Psoas muscle (tissue), 8 donors: ENCODE measurements at regions of chr1 and their contacts with region 1.

Region 1: DNA sequence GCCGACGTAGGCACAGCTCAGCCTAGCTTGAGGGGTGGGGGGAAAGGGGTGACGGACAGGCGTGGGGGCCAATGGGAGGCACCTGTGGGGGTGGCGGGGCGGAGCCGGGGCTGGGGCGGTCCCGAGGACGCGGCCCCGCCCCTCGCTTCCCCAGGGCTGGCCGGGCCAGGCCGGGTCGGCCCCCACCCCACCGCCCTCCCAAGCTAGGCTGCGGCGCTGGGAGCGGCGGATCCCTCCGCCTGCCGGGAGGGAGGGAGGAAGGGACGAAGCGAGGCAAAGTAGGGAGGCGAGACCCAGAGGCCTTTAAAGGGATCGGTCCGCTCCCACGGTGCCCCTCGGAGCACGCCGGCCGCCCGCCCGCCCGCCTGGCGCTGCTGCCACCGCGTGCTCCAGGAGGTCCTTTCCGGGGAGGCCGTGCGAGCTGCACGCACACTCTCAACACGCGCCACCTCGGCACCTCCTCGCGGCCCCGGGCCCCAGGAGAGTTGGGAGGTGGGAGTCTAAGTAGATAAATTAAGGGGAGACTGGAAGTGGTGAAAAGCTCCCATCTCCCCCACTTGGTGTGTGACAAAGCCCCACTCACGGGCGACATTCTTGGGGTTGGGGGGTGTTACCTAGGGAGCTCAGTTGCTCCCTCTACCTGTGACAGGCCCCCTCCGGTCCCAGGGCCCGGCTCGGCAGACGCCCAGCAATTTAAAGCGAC is 373 bp upstream of the MEF2D start:
- DNase-seq: peak; percentile 95 to 97
- ATAC-seq: peak; percentile 57 to 71 (median 68)
- H3K4me3 ChIP-seq: peak overlapping the region; percentile 98
- H3K27ac ChIP-seq: peak overlapping the region; percentile 99
- H3K4me1 ChIP-seq: peaks cover 60% of the 10 kb centered on the region
- H3K27me3 ChIP-seq: no peaks in the 10 kb centered on the region
- CTCF ChIP-seq: peak; percentile 45

Region 2: DNA sequence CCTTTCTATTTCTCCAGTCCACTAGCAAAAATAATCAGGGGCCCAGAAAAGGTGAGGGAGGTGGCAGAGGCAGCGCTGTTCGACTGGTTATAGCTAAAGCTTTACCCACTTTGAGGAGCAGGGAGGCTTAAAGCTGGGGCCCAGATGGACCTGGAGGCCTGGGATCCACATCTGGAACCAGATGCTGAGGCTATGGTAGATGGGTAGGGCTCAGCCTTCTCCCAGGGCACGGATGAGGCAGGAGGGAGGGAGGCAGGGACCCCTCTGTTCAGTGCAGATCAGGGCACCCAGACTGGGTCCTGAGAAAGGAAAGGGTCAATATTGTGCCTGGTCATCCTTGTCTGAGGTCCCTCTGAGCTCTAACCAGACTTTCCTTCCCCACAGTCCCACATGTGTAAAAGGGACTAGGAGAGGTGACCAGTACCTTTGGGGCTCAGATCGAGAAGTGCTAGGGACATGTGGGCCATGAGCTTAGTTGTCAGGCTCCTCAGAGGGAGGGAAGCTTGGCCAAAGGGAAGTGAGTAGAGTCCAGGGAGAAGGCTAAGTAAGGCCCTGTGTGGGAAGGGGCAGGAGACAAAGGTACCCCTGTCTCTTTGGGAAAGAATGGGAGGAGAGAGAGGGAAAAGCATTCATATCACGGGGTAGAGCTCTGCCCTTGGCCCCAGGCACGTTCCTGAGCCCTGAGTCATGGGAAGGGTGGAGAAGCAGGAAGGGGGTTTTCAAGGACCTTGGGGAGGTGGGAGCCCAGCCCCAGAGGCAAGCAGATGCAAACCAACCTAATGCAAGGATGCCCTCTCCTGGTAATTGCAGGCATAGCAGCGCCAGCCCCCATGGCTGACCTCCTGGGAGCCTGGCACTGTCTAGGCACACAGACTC is 371.0 kb before region 1 on chr1:
- intact Hi-C with region 1: loop called in 1 of 2 experiments (anchors 10 kb)
- DNase-seq: peak; percentile 89 to 93
- ATAC-seq: peak; percentile 77 to 81 (median 80)
- H3K4me3 ChIP-seq: peak overlapping the region; percentile 45
- H3K27ac ChIP-seq: peak overlapping the region; percentile 99
- H3K4me1 ChIP-seq: peaks cover 57% of the 10 kb centered on the region
- H3K27me3 ChIP-seq: no peaks in the 10 kb centered on the region
- CTCF ChIP-seq: peak; percentile 98

Region 3: GRCh38 chr1:156276966-156277381 is 224.0 kb before region 1 on chr1:
- intact Hi-C with region 1: no loop called
- DNase-seq: no peak
- ATAC-seq: peak in 2 of 4 donors; percentile 26 to 32
- H3K4me3 ChIP-seq: no peak overlapping the region
- H3K27ac ChIP-seq: no peak overlapping the region
- H3K4me1 ChIP-seq: peaks cover 25% of the 10 kb centered on the region
- H3K27me3 ChIP-seq: no peaks in the 10 kb centered on the region
- CTCF ChIP-seq: no peak

Region 4: DNA sequence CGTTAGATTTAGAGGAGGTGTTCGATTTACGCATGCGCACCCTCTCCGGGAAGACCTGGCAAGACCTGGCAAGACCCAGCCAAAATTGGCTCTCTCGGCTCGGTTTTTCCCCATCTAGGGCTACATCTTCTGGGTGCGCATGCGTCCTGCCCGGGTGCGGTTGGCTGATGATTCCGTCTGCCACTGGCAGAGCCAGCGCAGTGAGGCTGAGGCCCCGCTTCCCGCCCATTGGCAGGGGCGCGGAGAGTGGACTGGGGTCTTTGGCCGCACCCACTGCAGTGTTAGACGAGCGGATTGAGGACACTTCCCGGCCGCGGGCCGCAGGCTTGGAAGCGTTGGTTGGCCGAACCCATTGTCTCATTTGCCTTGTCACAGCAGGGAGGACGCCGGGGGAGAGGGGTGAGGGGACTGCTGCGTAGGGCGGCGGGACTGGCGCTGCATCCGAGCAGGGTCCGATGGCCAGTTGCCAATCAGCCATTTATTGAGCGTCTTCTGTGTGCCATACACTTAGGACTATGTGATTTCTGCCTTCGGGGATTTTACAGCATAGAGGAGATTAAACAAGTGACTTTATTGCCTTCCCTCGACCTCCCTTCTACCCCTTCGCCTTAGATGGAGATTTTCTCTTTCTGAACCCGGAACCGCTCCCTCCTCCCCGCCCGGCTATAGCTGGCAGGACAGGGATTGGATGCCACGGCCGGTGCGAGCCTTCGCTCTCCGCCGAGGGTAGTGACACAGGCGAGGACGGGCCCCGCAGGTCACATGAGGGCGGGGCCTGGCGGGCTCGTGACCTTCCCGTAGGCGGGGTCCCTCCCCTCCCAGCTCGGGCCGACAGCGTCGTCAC is 44.1 kb before region 1 on chr1:
- intact Hi-C with region 1: loop called (anchors 2 to 5 kb)
- DNase-seq: peak; percentile 98 to 99
- ATAC-seq: peak; percentile 89 to 91 (median 90)
- H3K4me3 ChIP-seq: peak overlapping the region; percentile 74
- H3K27ac ChIP-seq: peak overlapping the region; percentile 99
- H3K4me1 ChIP-seq: peaks cover 8% of the 10 kb centered on the region
- H3K27me3 ChIP-seq: no peaks in the 10 kb centered on the region
- CTCF ChIP-seq: no peak

Region 5: DNA sequence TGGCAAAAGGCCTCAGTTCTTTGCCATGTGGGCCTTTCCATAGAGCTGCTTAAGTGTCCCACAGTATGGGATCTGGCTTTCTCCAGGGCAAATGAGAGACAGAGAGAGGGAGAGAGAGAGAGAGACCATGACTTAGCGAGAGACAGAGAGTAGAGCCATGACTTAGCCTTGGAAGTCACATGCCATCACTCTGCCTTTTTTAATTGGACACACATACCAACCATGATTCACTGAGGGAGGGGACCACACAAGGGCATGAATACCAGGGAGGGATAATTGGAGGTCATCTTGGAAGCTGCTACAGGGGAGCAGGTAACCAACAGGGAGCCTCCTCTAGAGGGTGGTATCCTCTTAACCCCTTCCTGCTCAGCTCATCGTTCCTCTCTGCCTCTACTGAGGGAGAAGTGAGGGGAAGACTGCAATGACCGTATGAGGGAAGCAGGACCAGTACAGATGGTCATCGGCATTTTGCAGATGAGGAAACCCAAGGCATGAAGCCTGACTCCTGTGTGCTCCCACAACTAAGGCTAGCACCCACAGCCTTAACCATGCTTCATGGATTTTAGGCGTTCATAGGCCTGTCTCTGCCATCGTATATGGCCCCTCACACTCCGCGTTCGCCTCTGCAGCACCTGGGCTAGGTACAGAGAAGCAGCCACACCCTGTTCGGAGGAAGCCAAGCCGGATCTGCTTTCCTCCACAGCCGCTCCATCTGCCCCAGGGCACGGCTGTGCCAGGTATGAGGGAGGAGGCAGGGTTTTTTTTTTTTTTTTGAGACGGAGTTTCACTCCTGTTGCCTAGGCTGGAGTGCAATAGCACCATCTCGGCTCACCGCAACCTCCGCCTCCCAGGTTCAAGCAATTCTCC is 38.9 kb before region 1 on chr1:
- intact Hi-C with region 1: loop called (anchors 2 to 5 kb)
- DNase-seq: no peak
- ATAC-seq: peak in 1 of 4 donors; percentile 3
- H3K4me3 ChIP-seq: no peak overlapping the region
- H3K27ac ChIP-seq: peak overlapping the region; percentile 63
- H3K4me1 ChIP-seq: peaks cover 42% of the 10 kb centered on the region
- H3K27me3 ChIP-seq: no peaks in the 10 kb centered on the region
- CTCF ChIP-seq: no peak